ENCODE measurements at regions of chr1 and their contacts with region 1.

Region 1: GRCh38 chr1:235328357-235329138 is at the start of gene GGPS1:
- DNase-seq: peak; percentile 99
- ATAC-seq: peak; percentile 84
- H3K4me3 Mint-ChIP-seq: no peak within 1 kb of the TSS
- H3K27ac Mint-ChIP-seq: no peak within 1 kb of the TSS
- H3K4me1 Mint-ChIP-seq: peaks cover 25% of the 10 kb centered on the region
- H3K27me3 Mint-ChIP-seq: no peaks in the 10 kb centered on the region
- total RNA-seq, gene GGPS1: 24.5 to 25.9 TPM

Region 2: GRCh38 chr1:235313931-235314678 is 14.4 kb before region 1 on chr1:
- CTCF ChIA-PET with region 1: interaction called, 14 read pairs
- POLR2A ChIA-PET with region 1: interaction called, 21 read pairs
- DNase-seq: no peak
- ATAC-seq: no peak
- H3K4me3 Mint-ChIP-seq: peak overlapping the region; percentile 14
- H3K27ac Mint-ChIP-seq: peak overlapping the region; percentile 23
- H3K4me1 Mint-ChIP-seq: peaks cover 68% of the 10 kb centered on the region
- H3K27me3 Mint-ChIP-seq: no peaks in the 10 kb centered on the region

Measured in activated CD8-positive, alpha-beta T cell treated with anti-CD3 and anti-CD28 coated beads, Interleukin-2, amount 10 ng/mL, durations not matched to agents 7 days and 5 days (primary cell).